Posterior cingulate gyrus (tissue), 11 donors: ENCODE measurements at regions of chr9 and their contacts with region 1.

Region 1: DNA sequence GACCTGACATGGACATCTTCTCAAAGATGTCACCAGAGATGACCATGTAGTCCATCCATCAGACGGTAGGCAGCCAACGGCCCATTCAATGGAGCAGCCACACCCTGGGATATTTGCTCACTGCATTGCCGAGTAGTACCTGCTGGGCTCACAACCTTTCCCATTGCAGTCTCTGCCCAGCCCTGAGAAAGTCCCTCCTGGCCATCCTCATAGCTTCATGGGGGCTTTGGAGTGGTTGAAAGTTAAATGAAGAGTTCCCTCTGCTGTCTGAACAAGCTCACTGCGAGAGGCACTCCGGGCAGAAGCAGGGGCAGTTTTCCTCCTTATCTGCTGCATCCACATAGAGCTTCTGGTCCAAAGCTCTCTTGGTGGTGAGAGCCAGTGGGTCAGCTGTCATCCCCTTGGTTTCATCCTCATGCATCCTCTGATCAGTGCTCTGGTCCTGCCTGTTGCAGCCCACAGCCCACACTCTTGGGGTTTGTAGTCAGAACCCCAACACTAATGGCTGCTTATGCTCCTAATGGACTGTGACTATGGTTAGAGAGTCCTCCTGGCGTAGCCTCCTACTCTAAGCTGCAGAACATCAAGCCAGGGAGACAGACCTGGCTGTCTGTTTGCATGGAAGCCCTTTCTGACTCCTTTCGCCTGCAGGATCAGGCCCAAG is 23.4 kb downstream of the TNFSF8 start:
- DNase-seq: no peak

Region 2: GRCh38 chr9:114405294-114406034 is 501.6 kb before region 1 on chr9:
- intact Hi-C with region 1: loop called (anchors 10 kb)
- DNase-seq: peak; percentile 47 to 97 (median 86)

Region 3: DNA sequence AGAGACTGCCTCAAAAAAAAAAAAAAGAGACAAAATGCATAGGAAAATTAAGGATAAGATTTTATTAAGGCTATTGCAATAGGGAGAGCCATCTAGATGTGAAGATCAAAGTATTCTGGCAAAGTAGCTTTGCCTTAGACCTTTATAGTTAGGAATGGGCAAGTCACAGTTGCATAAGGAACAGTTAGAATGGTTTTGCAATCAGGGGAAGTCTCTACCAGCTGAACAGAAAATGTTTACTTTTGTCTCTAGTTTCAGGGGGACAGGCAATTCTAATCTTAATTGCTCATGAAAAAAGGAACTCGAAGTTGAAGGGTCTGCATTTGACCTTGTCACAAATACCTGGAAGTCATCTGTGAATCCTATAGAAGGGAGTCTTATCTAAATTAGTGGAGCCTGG is 332.6 kb before region 1 on chr9:
- intact Hi-C with region 1: no loop called
- DNase-seq: no peak

Region 4: GRCh38 chr9:114662081-114662989 is 244.7 kb before region 1 on chr9:
- intact Hi-C with region 1: loop called (anchors 2 kb)
- DNase-seq: peak in 6 of 10 donors; percentile 20 to 89 (median 58)

Region 5: DNA sequence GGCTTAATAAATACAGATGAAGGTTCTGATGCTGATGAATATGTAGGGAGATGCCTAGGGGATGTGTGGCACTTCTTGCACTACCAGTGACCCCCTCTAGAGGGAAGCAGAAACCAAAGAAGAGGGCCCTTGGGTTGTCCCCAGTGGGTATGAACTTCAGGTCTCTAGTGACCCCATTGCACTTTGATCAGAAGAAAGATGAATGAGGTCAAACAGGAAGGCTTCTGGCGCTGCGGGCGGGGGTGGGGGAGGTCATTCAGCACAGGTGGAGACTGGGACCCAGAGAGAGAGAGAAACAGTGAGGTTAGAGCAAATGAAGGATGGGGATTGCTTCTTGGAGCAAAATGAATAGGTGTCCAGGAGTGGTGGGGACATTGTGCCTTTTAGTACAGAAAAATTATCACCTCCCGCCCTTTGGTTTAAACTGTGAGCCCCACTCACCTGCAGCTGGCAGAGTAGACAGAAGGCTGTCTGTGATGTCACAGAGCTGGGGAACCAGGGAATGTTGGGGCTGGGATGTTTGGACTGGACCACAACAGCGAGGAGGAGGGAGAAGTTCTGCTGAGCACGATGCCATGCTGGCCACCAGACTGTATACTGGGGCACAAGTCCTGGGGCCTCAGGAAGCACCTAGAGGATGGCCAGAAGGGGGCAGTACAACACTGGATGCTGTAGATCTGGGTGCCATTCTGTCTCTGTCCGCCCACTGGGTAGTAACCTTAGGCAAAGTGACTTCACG is 225.3 kb before region 1 on chr9 and contains the start of gene TEX48:
- intact Hi-C with region 1: loop called (anchors 1 kb)
- DNase-seq: peak in 6 of 10 donors; percentile 33 to 91 (median 52)

Region 6: DNA sequence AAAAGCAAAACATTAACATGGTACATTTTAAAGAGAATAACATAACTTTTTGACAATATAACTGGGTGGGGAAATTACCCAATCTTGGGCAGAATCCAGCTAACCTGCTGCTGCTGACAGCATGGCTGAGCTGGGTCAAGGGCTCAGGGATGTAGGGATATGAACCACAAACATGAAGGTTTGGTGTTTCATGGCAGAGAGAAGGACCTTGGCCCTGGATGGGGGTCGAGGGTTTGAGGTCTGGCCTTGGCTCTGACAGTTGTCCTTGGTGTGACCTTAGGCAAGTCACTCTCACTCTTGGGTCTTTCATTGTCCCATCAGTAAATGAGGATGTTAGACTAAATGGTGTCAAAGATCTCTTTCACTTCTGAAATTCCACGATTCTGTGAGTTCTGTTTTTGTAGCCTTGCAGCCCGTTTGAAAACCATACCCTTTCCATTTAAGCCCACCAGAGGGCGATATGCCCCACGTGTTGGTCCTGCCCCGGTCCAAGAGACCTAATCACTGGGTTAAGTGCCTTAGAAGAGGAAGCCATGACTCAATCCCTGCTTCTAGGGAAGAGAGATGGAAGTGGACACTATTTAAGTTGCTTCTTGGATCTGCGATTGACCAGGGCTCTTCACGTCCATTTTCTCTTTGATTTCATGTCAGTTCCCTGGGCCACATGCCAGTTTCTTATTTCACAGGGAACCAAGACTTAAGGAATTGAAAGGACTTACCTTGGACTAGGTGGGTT is 168.3 kb before region 1 on chr9:
- intact Hi-C with region 1: loop called (anchors 1 kb)
- DNase-seq: peak in 7 of 10 donors; percentile 26 to 90 (median 61)

Region 7: DNA sequence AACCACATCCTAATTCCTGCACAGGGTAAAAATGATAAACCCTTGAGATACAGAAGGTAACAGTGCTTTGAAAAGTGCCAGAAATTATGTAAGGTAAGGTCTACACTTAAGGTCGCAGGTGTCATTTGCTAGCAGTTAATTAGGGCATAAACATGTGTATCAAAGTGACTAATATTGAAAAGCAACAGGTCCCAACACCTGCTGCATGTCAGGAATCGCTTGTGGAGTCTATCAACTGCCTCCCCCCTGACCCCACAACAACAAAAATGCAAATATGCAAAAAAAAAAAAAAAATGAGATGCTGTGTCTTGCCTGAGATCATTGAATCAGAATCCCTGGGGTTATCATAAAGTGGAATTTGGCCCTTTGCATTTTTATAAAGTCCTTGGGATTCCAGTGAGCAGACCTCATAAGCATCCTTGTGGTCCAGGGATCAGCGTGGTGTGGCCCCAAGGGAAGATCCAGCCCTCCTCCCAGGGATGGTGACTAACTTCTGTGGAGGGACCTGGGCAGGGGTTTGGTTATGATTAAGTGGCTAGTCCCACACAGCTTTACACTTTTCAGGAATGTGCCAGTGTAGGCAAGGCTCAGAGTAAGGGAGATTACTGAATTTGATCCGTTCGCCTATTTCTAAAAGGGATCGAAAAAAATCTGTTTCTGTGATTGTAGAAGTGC is 115.9 kb after region 1 on chr9:
- intact Hi-C with region 1: no loop called
- DNase-seq: no peak